ENCODE measurements at regions of chr13 and their contacts with region 1.

Region 1: GRCh38 chr13:73708393-73708985 is 425.7 kb downstream of the KLF12 start:
- DNase-seq: peak; percentile 49 to 65
- H3K4me3 ChIP-seq: no peak overlapping the region
- H3K27ac ChIP-seq: no peak overlapping the region
- H3K4me1 ChIP-seq: no peaks in the 10 kb centered on the region
- H3K27me3 ChIP-seq: no peaks in the 10 kb centered on the region
- CTCF ChIP-seq: peak; percentile 95

Region 2: DNA sequence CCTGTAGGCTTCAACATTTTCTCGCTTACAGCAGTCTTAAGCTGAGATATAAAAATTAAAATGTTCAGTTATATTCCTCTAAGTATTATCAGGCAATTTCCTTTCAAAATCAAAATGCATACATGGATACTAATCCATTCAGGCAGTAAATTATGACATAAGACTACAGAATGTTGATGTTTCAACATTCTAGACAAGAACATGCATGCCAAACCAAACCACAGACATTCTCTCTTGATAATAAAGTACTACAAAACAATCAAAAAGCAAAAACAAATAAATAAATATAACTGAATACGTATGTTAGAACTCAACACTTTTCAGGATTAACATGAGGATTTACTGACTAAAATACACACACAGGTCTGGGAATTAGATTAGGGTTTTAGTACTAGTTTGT is 934.5 kb before region 1 on chr13:
- CTCF ChIA-PET with region 1: no interaction called
- POLR2A ChIA-PET with region 1: no interaction called
- intact Hi-C with region 1: loop called (anchors 1 kb)
- DNase-seq: no peak
- H3K4me3 ChIP-seq: no peak overlapping the region
- H3K27ac ChIP-seq: no peak overlapping the region
- H3K4me1 ChIP-seq: no peaks in the 10 kb centered on the region
- H3K27me3 ChIP-seq: no peaks in the 10 kb centered on the region
- CTCF ChIP-seq: no peak

Region 3: DNA sequence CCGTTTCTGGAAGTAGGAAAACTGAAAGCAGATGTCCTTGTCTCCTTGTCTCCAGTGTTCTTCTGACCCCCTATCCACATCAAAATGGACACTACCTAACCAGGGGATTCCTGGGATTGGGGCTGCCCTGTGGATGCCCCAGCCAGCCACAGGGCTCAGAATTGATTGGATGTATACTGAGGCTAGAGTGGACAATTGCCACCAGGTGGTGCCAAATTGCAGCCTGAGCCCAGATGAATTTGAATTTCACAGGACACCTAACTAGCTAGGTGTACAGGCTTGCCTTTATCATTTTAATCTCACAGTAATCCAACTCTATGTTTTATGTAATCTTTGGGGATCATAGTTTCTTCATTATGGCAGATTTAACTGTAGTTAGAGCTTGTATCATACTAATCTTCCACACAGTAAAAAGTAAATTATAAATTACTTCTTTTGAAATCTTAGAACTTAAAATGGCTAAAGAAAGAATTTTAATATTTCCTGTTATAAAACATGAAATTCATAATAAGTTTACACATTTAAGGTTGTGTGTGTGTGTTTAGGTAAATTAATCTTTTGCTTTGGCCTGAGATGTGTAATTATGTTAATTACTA is 868.6 kb before region 1 on chr13:
- CTCF ChIA-PET with region 1: interaction called, 10 read pairs
- POLR2A ChIA-PET with region 1: no interaction called
- intact Hi-C with region 1: loop called (anchors 1 kb)
- DNase-seq: peak; percentile 39 to 54
- H3K4me3 ChIP-seq: no peak overlapping the region
- H3K27ac ChIP-seq: no peak overlapping the region
- H3K4me1 ChIP-seq: no peaks in the 10 kb centered on the region
- H3K27me3 ChIP-seq: no peaks in the 10 kb centered on the region
- CTCF ChIP-seq: peak; percentile 81

Region 4: DNA sequence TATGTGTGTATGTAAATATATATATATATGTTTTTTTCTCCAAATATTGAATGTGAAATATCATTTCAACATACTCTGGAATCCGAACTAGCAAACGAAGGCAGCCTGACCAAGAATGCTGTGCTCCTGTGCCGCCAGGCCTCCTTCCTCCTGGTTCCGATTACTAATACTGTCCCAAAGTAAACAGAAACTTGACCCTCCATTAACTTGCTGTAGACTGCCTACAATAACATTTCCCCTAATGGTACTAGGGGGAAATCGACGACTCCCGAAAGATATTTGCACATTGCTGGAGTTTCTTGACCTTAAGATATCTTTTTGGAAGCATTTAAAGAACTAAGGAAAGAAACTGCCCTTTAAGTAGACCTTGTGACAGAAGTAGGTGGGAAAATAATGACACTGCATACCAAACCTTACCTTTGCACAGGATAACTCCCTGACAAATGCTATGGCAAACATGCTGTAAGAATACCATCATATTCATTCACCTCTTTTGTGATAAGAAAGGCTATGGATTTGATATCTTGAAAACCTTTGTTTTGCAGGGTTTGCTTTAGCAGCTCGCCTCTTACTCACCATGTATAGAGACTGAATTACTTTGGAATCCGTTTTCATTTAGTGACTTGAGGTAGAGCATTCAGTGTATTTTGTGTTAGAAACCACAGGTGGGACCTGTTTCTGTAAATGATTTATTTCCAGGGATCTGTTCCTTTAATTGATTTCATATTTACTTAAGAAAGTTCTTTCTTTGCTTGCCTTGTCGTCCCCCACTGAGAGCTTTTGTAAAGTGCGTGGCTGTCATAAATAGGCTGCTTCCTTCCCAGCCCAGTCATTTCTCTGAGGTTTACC is 569.6 kb before region 1 on chr13:
- CTCF ChIA-PET with region 1: no interaction called
- POLR2A ChIA-PET with region 1: interaction called, 8 read pairs
- intact Hi-C with region 1: loop called (anchors 2 kb)
- DNase-seq: peak; percentile 63 to 97
- H3K4me3 ChIP-seq: peak overlapping the region; percentile 57; the same call in 1 of the 2 replicates
- H3K27ac ChIP-seq: peak overlapping the region; percentile 100
- H3K4me1 ChIP-seq: peaks cover 74% of the 10 kb centered on the region
- H3K27me3 ChIP-seq: no peaks in the 10 kb centered on the region
- CTCF ChIP-seq: no peak

Region 5: GRCh38 chr13:73369095-73369494 is 339.4 kb before region 1 on chr13:
- CTCF ChIA-PET with region 1: no interaction called
- POLR2A ChIA-PET with region 1: no interaction called
- intact Hi-C with region 1: no loop called
- DNase-seq: peak; percentile 4 to 74
- H3K4me3 ChIP-seq: peak overlapping the region; percentile 10; the same call in 1 of the 2 replicates
- H3K27ac ChIP-seq: peak overlapping the region; percentile 96
- H3K4me1 ChIP-seq: peaks cover 52% of the 10 kb centered on the region
- H3K27me3 ChIP-seq: no peaks in the 10 kb centered on the region
- CTCF ChIP-seq: no peak

Region 6: GRCh38 chr13:73421310-73421912 is 287.1 kb before region 1 on chr13:
- CTCF ChIA-PET with region 1: no interaction called
- POLR2A ChIA-PET with region 1: no interaction called
- intact Hi-C with region 1: loop called (anchors 1 kb)
- DNase-seq: peak; percentile 43 to 87
- H3K4me3 ChIP-seq: no peak overlapping the region
- H3K27ac ChIP-seq: peak overlapping the region; percentile 89
- H3K4me1 ChIP-seq: peaks cover 25% of the 10 kb centered on the region
- H3K27me3 ChIP-seq: no peaks in the 10 kb centered on the region
- CTCF ChIP-seq: no peak

Region 7: DNA sequence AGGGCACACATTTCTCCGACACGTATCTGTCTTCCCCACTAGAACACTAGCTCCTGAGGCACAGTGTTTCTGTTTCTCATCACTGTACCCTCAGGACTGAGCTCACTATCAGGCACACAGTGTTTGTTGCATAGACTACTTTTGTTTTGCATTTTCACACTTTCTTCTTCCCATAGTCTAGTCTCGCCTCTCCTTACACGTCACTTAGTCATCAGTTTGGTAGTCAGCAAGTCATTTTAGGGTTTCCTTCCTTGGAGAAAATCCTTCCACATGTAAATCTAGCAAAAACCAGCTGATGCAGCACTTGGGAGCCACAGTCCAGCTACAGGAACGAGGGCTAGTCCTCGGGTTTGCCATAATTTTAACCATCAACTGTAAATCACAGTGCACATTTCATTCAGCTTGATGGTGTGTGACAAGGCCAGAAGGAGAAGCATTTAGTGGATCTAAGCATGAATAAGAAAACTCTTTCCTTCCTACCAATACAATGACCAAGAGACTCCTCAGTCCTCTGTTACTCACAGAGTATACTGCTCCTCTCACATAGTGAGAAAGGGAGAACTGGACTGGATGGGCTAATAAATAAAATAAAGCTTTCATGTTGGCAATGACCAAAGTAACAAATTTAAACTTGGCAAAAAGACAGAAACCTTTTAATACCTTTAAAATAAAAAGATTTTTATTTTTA is 204.7 kb after region 1 on chr13:
- CTCF ChIA-PET with region 1: no interaction called
- POLR2A ChIA-PET with region 1: no interaction called
- intact Hi-C with region 1: no loop called
- DNase-seq: no peak
- H3K4me3 ChIP-seq: no peak overlapping the region
- H3K27ac ChIP-seq: no peak overlapping the region
- H3K4me1 ChIP-seq: no peaks in the 10 kb centered on the region
- H3K27me3 ChIP-seq: no peaks in the 10 kb centered on the region
- CTCF ChIP-seq: no peak